ENCODE measurements at regions of chr12 and their contacts with region 1.

Region 1: GRCh38 chr12:569803-570434 is 93.3 kb downstream of the NINJ2 start:
- DNase-seq: peak; percentile 84
- ATAC-seq: peak; percentile 98
- H3K4me3 Mint-ChIP-seq: peak overlapping the region; percentile 81
- H3K27ac Mint-ChIP-seq: no peak overlapping the region
- H3K4me1 Mint-ChIP-seq: peaks cover 4% of the 10 kb centered on the region
- H3K27me3 Mint-ChIP-seq: no peaks in the 10 kb centered on the region
- CTCF ChIP-seq: no peak

Region 2: DNA sequence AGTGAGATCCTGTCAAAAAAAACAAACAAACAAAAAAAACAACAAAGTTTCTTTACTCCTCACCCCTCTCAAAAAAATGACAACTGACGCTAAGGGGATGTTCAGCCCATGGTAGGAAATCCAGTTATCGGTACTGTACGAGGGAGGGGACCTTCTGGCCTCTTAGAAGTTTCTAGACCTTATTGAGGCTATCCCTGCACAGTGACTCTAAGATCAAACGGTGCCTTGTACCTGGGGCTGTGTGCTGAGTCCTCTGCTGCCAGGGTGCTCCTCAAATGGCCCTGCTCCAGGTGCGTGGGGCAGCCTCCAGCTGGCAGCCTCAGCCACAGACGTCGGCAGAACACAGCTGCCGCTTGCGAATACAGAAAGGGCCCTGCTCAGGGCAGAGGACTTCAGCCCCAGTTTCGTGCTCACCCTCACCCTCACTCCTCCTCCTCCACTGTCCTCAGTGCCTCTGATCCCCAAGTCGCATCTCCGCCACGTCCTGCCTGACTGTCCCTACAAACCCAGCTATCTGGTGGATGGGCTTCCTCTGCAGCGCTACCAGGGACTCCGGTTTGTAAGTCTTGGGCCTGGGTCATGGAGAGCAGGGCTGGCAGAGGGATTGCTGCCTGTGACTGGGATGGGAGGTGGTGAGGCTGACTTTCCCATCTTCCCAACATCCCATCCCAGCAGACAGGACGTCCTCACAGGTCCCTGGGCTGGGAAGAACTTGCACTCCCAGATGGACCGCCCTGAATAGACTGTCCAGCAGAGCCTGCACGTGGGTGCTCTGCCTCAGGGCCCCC is 19.3 kb before region 1 on chr12:
- CTCF ChIA-PET with region 1: no interaction called
- POLR2A ChIA-PET with region 1: no interaction called
- intact Hi-C with region 1: no loop called
- DNase-seq: no peak
- ATAC-seq: no peak
- H3K4me3 Mint-ChIP-seq: no peak overlapping the region
- H3K27ac Mint-ChIP-seq: no peak overlapping the region
- H3K4me1 Mint-ChIP-seq: peaks cover 10% of the 10 kb centered on the region
- H3K27me3 Mint-ChIP-seq: peaks cover 43% of the 10 kb centered on the region
- CTCF ChIP-seq: no peak

Region 3: GRCh38 chr12:868722-869121 is 298.8 kb after region 1 on chr12:
- CTCF ChIA-PET with region 1: no interaction called
- POLR2A ChIA-PET with region 1: no interaction called
- intact Hi-C with region 1: loop called (anchors 2 kb)
- DNase-seq: no peak
- ATAC-seq: no peak
- H3K4me3 Mint-ChIP-seq: no peak overlapping the region
- H3K27ac Mint-ChIP-seq: no peak overlapping the region
- H3K4me1 Mint-ChIP-seq: no peaks in the 10 kb centered on the region
- H3K27me3 Mint-ChIP-seq: no peaks in the 10 kb centered on the region
- CTCF ChIP-seq: no peak

Measured in activated B cell treated with CpG ODN at 0.5 μM for 24 hours (primary cell).